Transverse colon (tissue), 4 donors: ENCODE measurements at regions of chr12 and their contacts with region 1.

Region 1: GRCh38 chr12:94218233-94218632 is 69.9 kb downstream of the PLXNC1 start:
- DNase-seq: no peak
- H3K4me3 ChIP-seq: no peak overlapping the region
- H3K27ac ChIP-seq: no peak overlapping the region
- H3K4me1 ChIP-seq: no peaks in the 10 kb centered on the region
- H3K27me3 ChIP-seq: no peaks in the 10 kb centered on the region
- CTCF ChIP-seq: no peak
- EP300 ChIP-seq: no peak
- POLR2A ChIP-seq: no peak

Region 2: DNA sequence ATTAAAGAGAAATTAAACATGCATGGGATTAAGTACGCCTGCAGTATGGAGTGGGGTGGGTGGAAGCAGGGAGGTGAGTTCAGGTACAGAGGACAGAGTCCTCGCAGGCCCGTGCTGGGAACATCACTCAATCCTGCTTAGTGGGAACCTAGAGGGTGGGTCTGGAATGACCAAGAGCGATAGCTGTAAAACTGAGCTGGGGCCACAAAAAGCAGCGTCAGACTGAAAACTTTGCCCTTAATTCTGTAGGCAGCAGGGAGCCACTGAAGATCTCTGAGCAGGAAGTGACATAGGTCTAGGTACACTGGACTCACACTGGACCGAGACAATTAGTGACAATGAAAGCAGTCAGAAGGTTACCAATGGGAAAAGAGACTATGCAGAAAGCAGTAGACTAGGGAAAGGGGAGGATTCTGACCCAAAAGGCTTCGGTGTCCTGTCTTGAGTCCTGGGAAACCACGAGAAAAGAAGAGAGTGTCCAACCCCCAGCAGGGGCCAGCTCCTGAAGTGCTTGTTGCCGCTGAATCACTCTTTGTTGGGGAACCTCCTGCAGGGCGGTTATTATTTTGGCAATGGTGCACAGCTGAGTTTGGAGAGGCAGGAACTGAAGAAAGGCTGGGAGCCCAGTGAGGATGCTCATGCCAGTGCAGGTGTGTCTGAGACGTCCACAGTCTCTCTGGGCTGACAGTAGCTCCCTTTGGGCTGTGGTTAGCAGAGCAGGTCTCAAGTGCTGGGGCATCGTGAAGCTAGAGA is 27.6 kb after region 1 on chr12:
- in situ Hi-C with region 1: no loop called
- intact Hi-C with region 1: loop called (anchors 1 kb)
- DNase-seq: no peak
- H3K4me3 ChIP-seq: no peak overlapping the region
- H3K27ac ChIP-seq: no peak overlapping the region
- H3K4me1 ChIP-seq: no peaks in the 10 kb centered on the region
- H3K27me3 ChIP-seq: no peaks in the 10 kb centered on the region
- CTCF ChIP-seq: no peak
- EP300 ChIP-seq: no peak
- POLR2A ChIP-seq: no peak